Activated naive CD4-positive, alpha-beta T cell treated with anti-CD3 and anti-CD28 coated beads, Interleukin-2, amount 10 ng/mL, durations not matched to agents 7 days and 5 days (primary cell): ENCODE measurements at regions of chr9 and their contacts with region 1.

Region 1: DNA sequence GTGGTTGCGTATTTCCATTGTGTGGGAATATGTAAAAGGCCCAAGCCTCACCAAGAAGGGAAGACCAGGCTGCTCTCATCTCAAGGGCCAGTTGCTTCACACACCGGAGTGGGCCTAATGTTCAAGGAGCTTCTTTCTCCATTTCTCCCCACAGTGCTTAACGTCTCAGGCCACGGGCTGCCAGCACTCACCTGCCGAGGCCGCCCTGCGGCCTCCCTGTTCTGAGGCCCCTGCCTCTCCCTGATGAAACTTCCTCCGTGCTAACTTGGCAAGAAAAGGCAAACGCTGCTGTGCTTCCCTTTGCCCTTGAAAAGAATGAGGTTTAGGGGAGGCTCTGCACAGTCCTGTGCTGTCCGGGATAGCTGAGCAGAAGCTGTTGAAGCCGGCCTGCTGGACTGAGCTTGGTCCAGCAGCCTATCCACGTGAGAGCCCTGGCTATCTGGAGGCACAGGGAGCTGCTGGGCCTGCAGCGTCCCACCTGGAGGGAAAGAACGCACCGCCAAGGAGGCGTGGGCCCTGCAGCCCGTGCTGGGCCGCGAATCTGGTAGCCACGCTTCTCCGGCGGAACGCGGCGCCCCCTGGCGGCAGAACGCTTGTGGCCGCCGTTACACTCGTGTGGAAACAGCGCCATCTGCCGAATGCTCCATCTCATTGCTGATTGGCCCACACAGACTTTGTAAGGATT is 73.5 kb upstream of the PRSS3 start:
- DNase-seq: peak; percentile 89
- H3K4me3 Mint-ChIP-seq: no peak overlapping the region
- H3K27ac Mint-ChIP-seq: no peak overlapping the region
- H3K4me1 Mint-ChIP-seq: no peaks in the 10 kb centered on the region
- H3K27me3 Mint-ChIP-seq: peaks cover 29% of the 10 kb centered on the region

Region 2: GRCh38 chr9:33623658-33624586 is 97.9 kb before region 1 on chr9:
- CTCF ChIA-PET with region 1: interaction called, 280 read pairs
- DNase-seq: peak; percentile 79
- H3K4me3 Mint-ChIP-seq: no peak overlapping the region
- H3K27ac Mint-ChIP-seq: no peak overlapping the region
- H3K4me1 Mint-ChIP-seq: peaks cover 4% of the 10 kb centered on the region
- H3K27me3 Mint-ChIP-seq: peaks cover 38% of the 10 kb centered on the region

Region 3: GRCh38 chr9:33703430-33704102 is 18.2 kb before region 1 on chr9:
- CTCF ChIA-PET with region 1: interaction called, 14 read pairs
- DNase-seq: no peak
- H3K4me3 Mint-ChIP-seq: no peak overlapping the region
- H3K27ac Mint-ChIP-seq: no peak overlapping the region
- H3K4me1 Mint-ChIP-seq: no peaks in the 10 kb centered on the region
- H3K27me3 Mint-ChIP-seq: peaks cover 14% of the 10 kb centered on the region

Region 4: DNA sequence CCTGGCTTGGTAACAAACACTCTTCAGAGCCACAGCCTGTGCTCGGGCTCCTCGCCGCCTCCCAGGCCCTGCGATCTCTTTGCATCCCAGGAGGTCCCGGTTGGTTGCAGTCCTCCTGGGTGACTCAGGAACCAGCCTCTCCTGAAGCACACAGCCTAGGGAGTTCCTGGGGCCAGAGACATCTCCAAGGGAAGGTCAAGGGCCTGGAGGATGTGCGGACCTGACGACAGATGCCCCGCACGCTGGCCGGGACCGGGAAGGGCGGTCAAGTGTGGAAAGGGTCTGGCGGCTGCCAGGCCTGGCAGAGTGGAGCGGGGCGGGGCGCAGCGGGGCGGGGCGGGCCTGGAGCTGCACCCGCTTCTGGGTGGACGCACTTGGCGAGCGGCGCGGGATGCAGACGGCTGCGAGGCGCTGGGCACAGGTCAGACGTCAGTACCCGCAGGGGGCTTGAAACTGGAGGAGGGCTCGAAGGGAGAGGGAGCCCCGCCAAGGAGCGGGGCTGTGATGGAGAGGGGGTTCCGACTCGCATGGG is 28.6 kb after region 1 on chr9:
- CTCF ChIA-PET with region 1: no interaction called
- DNase-seq: no peak
- H3K4me3 Mint-ChIP-seq: no peak overlapping the region
- H3K27ac Mint-ChIP-seq: no peak overlapping the region
- H3K4me1 Mint-ChIP-seq: peaks cover 36% of the 10 kb centered on the region
- H3K27me3 Mint-ChIP-seq: peaks cover 82% of the 10 kb centered on the region